ENCODE measurements at regions of chr9 and their contacts with region 1.

Region 1: GRCh38 chr9:115146581-115147021 is 28.6 kb upstream of the TNC start:
- DNase-seq: no peak
- H3K4me3 ChIP-seq: no peak overlapping the region
- H3K27ac ChIP-seq: peak overlapping the region; percentile 77 to 87 (median 86)
- H3K4me1 ChIP-seq: peaks cover 0 to 51% (median 25%) of the 10 kb centered on the region in 4 donors
- H3K27me3 ChIP-seq: no peaks in the 10 kb centered on the region
- CTCF ChIP-seq: no peak
- EP300 ChIP-seq: peak; percentile 80
- POLR2A ChIP-seq: no peak

Region 2: GRCh38 chr9:114681594-114682332 is 464.8 kb before region 1 on chr9 and contains the start of gene TEX48:
- intact Hi-C with region 1: no loop called
- DNase-seq: no peak
- H3K4me3 ChIP-seq: no peak within 1 kb of the TSS
- H3K27ac ChIP-seq: no peak within 1 kb of the TSS
- H3K4me1 ChIP-seq: peaks cover 0 to 15% (median 7%) of the 10 kb centered on the region in 4 donors
- H3K27me3 ChIP-seq: no peaks in the 10 kb centered on the region
- CTCF ChIP-seq: peak; percentile 34 to 62 (median 47)
- EP300 ChIP-seq: no peak
- POLR2A ChIP-seq: no peak
- total RNA-seq, gene TEX48: not detected

Region 3: GRCh38 chr9:115035841-115036612 is 110.6 kb before region 1 on chr9:
- intact Hi-C with region 1: loop called (anchors 10 kb)
- DNase-seq: no peak
- H3K4me3 ChIP-seq: no peak overlapping the region
- H3K27ac ChIP-seq: peak overlapping the region; percentile 64 to 80 (median 70)
- H3K4me1 ChIP-seq: peaks cover 13 to 79% (median 46%) of the 10 kb centered on the region in 4 donors
- H3K27me3 ChIP-seq: no peaks in the 10 kb centered on the region
- CTCF ChIP-seq: no peak
- EP300 ChIP-seq: no peak
- POLR2A ChIP-seq: no peak

Region 4: DNA sequence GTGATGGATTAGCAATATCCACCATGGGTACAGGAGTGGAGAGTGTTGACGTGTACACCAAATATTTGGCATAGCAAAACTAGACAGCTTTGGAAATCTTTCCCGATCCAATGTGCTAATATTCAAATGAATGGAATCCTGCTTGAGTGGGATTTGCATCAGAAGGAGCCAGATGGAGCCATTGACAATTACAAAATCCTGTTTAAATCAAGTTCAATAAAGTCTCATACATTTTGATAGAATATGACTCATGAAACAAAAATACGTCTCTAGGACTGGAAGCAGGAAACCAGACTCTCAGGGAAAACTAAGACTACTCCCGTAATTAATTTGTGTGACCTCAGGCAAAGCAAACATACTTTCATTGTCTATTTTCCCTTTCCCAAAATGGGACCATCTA is 41.7 kb before region 1 on chr9:
- intact Hi-C with region 1: no loop called
- DNase-seq: no peak
- H3K4me3 ChIP-seq: no peak overlapping the region
- H3K27ac ChIP-seq: peak overlapping the region in 2 of 4 donors; percentile 54 to 68
- H3K4me1 ChIP-seq: peaks cover 0 to 66% (median 50%) of the 10 kb centered on the region in 4 donors
- H3K27me3 ChIP-seq: no peaks in the 10 kb centered on the region
- CTCF ChIP-seq: no peak
- EP300 ChIP-seq: no peak
- POLR2A ChIP-seq: no peak

Region 5: GRCh38 chr9:115262477-115262876 is 115.9 kb after region 1 on chr9:
- intact Hi-C with region 1: no loop called
- DNase-seq: no peak
- H3K4me3 ChIP-seq: no peak overlapping the region
- H3K27ac ChIP-seq: peak overlapping the region in 1 of 4 donors; percentile 8
- H3K4me1 ChIP-seq: peaks cover 0 to 40% (median 26%) of the 10 kb centered on the region in 4 donors
- H3K27me3 ChIP-seq: no peaks in the 10 kb centered on the region
- CTCF ChIP-seq: no peak
- EP300 ChIP-seq: no peak
- POLR2A ChIP-seq: no peak